ENCODE measurements at regions of chr6 and their contacts with region 1.

Region 1: DNA sequence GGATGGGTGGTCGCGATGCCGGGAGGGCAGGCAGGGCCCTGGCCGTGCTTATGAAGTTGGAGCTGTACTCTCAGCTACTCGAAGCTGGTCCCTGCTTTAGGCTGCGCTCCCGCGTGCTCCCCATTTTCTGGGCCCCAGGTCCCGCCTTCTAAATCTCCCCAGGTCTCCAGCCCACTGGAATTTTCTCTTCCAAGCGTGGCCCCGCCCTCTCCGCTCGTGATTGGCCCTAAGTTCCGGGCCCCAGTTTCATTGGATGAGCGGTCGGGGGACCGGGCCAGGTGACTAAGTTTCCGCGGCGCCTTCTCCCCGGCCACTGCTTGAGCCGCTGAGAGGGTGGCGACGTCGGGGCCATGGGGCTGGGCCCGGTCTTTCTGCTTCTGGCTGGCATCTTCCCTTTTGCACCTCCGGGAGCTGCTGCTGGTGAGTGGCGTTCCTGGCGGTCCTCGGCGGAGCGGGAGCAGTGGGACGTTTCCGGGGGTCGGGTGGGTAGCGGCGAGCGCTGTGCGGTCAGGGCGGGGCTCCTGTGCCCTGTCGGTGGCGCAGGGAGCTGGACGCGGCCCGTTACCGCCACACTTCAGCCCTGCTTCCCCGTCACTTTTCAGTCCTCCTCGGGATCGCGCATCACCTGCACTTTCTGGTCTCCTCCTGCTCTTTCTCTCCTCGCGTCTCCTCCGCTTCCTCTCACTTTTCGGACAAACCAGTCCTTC is at the start of gene MICA:
- DNase-seq: peak; percentile 94
- ATAC-seq: peak; percentile 65
- H3K4me3 ChIP-seq: peak within 1 kb of the TSS; percentile 97
- H3K27ac ChIP-seq: peak within 1 kb of the TSS; percentile 40
- H3K4me1 ChIP-seq: peaks cover 49% of the 10 kb centered on the region
- H3K27me3 ChIP-seq: no peaks in the 10 kb centered on the region
- CTCF ChIP-seq: no peak
- total RNA-seq, gene MICA: 33.1 and 35.0 TPM in 2 replicates

Region 2: GRCh38 chr6:31163922-31164321 is 239.5 kb before region 1 on chr6:
- CTCF ChIA-PET with region 1: no interaction called
- POLR2A ChIA-PET with region 1: interaction called, 10 read pairs
- intact Hi-C with region 1: no loop called
- DNase-seq: no peak
- ATAC-seq: no peak
- H3K4me3 ChIP-seq: no peak overlapping the region
- H3K27ac ChIP-seq: no peak overlapping the region
- H3K4me1 ChIP-seq: peaks cover 10% of the 10 kb centered on the region
- H3K27me3 ChIP-seq: no peaks in the 10 kb centered on the region
- CTCF ChIP-seq: no peak

Region 3: DNA sequence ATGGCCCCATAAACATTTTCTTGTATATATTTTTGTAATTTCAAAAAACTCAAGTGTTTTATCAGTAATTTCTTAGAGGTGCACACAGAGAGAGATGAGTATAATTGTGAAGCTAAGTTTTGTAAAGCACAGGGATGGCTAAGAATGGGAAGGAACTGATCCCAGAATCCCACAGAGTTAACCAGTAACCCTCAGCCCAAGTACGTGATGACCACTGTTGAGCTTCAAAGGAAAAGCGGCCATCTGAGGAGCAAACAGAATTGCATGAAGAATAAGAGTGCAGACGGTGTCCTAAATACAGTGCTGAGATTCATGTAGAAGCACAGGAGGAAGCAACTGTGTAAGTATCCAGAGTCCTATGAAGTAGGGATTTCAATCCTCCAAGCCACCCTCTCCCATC is 103.5 kb before region 1 on chr6:
- CTCF ChIA-PET with region 1: no interaction called
- POLR2A ChIA-PET with region 1: interaction called, 16 read pairs
- intact Hi-C with region 1: no loop called
- DNase-seq: no peak
- ATAC-seq: no peak
- H3K4me3 ChIP-seq: no peak overlapping the region
- H3K27ac ChIP-seq: no peak overlapping the region
- H3K4me1 ChIP-seq: no peaks in the 10 kb centered on the region
- H3K27me3 ChIP-seq: peaks cover 30% of the 10 kb centered on the region; the same call in 1 of the 2 replicates
- CTCF ChIP-seq: no peak

Measured in PC-3 (cell line).